GM12878 (cell line): ENCODE measurements at regions of chr14 and their contacts with region 1.

Region 1: DNA sequence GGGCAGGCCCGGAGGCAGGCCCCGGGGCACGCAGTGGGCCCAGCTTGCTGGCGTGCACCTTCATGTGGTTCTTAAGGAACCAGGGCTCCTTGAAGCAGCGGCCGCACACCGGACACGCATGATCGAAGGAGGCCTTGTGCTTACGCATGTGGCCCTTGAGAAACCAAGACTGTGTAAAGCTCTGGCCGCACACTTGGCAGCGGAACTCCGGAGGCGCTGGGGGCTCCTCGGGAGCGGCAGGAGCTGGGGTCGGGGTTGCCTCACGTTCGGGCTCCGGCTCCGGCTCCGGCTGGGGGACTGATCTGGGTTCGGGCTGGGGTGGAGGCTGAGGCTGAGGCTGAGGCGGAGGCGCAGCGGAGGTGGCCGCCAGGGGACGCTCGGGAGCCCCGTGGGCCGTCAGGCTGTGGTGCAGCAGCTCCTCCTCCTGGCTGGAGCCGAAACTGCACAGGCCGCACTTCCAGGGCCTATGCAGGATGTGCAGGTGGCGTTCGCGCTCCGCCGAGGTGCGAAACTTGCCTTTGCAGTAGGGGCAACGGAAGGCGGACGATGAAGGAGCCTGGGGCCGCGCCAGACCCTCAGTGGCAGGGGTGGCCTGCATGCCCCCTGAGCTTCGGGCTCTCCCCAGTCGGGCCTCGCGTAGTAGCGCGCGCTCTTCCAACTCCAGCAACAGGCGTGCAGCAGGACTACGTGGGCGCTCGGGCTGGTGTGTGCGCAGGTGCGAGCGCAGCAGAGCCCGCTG is 6.0 kb downstream of the ZNF219 start:
- DNase-seq: no peak
- ATAC-seq: peak; percentile 92
- H3K4me3 ChIP-seq: no peak overlapping the region
- H3K27ac ChIP-seq: no peak overlapping the region
- H3K4me1 ChIP-seq: no peaks in the 10 kb centered on the region
- H3K27me3 ChIP-seq: peaks cover 0 to 3% of the 10 kb centered on the region in 2 experiments; a peak in 2 of 4 replicates
- CTCF ChIP-seq: peak; percentile 100; a peak in 5 of 6 replicates
- EP300 ChIP-seq: no peak
- POLR2A ChIP-seq: no peak
- RAD21 ChIP-seq: peak; percentile 91

Region 2: DNA sequence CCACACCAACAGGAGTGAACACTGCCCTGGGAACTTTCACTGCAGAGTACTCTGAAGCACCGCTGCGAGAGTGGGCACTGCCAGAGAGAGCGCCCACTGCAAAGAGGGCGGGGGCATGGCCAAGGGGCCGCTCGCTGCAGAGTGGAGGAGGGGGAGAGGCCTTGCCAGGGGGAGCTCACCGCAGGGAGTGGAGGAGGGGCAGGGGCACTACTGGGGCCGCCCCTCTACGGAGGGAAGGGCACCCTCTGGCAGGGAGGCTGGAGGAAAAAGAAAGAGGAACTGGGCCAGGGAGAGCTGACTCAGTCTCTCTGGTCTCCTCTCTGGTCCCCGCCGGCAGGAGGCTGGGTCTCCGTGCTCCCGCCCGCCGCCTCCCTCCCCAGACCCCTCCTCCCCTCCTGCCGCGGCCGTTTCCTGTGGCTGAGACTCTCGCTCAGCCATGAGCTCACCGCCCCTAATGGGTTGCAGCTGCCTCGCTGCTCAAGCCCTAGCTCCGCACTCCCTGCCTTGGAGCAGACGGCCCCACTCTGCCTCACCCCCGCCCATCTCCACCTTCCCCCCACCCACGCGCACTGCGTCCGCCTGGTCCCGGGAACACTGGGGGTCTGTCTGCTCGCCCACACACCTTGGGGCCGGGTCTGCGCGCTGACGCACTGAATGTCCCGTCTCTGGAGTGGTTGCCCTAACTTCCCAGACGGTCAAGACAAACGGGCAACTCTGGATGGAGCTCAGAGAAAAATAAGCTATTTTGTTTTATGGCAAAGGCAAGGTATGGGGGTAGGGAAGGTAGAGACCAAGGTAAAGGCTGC is 21.0 kb before region 1 on chr14:
- CTCF ChIA-PET with region 1: interaction called, 93 read pairs
- POLR2A ChIA-PET with region 1: no interaction called
- RAD21 ChIA-PET with region 1: interaction called, 16 read pairs
- SMC1A ChIA-PET with region 1: interaction called, 9 read pairs
- in situ Hi-C with region 1: no loop called
- intact Hi-C with region 1: loop called (anchors 1 kb)
- DNase-seq: peak; percentile 51
- ATAC-seq: peak; percentile 82
- H3K4me3 ChIP-seq: peak overlapping the region; percentile 67
- H3K27ac ChIP-seq: no peak overlapping the region
- H3K4me1 ChIP-seq: peaks cover 29% of the 10 kb centered on the region
- H3K27me3 ChIP-seq: peaks cover 9 to 20% of the 10 kb centered on the region in 2 experiments
- CTCF ChIP-seq: no peak
- EP300 ChIP-seq: no peak
- POLR2A ChIP-seq: no peak
- RAD21 ChIP-seq: no peak

Region 3: DNA sequence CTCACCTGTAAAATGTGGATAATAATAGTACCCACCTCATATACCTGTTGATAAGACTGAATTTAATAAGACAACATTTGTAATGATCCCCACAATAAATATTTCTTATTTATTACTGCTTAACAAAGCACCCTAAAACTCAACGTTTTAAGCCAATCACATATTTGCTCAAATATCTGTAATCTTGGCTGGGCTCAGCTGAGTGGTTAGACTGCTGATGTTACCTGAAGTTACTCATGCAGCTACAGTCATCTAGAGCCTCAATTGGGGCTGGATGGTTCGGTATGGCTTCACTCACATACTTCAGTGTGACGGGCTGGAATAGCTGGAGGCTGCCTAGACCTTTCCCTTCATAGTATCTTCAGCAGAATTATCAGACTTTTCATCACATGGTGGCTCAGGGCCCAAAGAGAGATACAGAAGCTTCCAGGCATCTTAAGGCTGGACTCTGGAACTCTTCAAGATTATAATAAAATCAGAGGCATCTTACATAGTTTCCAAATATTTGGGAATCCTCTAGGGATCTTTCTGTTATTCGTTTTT is 67.7 kb after region 1 on chr14:
- CTCF ChIA-PET with region 1: no interaction called
- POLR2A ChIA-PET with region 1: no interaction called
- RAD21 ChIA-PET with region 1: no interaction called
- SMC1A ChIA-PET with region 1: no interaction called
- in situ Hi-C with region 1: no loop called
- intact Hi-C with region 1: no loop called
- DNase-seq: no peak
- ATAC-seq: no peak
- H3K4me3 ChIP-seq: no peak overlapping the region
- H3K27ac ChIP-seq: no peak overlapping the region
- H3K4me1 ChIP-seq: no peaks in the 10 kb centered on the region
- H3K27me3 ChIP-seq: no peaks in the 10 kb centered on the region
- CTCF ChIP-seq: no peak
- EP300 ChIP-seq: no peak
- POLR2A ChIP-seq: no peak
- RAD21 ChIP-seq: no peak